IMR-90 (cell line): ENCODE measurements at regions of chr16 and their contacts with region 1.

Region 1: DNA sequence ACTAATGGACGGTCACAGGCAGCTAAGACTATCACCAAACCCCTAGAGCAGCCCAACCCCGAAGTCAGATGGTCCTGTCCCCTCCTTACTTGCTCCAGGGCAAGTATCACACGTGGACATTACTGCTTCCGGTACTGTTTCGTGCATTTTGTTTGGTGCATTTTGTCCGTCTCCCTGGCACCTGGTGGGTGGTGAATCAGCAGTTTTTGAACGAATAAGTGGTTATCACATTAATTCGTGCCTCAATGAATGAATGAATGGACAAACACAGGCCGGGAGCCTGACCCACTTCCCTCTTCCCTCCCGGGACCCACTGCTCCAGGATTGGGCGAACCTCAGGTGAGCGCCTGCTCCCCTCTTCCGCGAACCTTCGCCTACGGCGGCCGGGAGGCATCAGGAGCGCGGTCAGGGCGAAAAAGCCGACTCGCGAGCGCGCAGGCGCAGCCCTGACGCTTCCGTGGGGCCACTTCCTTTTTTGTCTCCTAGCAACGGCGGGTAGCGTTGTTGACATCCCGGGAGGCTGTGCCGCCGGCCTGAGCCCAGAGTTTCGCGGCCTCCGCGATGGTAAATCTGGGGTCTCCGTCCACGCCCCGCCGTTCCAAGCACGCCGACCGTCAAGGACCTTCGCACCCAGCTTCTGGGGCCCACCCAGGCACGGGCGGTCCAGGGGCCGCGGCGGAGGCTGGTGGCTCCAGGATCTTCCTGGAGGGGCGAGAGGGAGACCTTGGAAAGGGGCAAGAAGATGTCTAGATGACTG is at the start of gene DYNLRB2:
- DNase-seq: peak; percentile 84
- ATAC-seq: peak; percentile 99
- H3K4me3 ChIP-seq: peak within 1 kb of the TSS; percentile 50
- H3K27ac ChIP-seq: no peak within 1 kb of the TSS
- H3K4me1 ChIP-seq: no peaks in the 10 kb centered on the region
- H3K27me3 ChIP-seq: no peaks in the 10 kb centered on the region
- CTCF ChIP-seq: no peak
- POLR2A ChIP-seq: peak; percentile 30; the same call in 1 of the 2 replicates
- RAD21 ChIP-seq: no peak
- total RNA-seq, gene DYNLRB2: not detected in 2 replicates

Region 2: DNA sequence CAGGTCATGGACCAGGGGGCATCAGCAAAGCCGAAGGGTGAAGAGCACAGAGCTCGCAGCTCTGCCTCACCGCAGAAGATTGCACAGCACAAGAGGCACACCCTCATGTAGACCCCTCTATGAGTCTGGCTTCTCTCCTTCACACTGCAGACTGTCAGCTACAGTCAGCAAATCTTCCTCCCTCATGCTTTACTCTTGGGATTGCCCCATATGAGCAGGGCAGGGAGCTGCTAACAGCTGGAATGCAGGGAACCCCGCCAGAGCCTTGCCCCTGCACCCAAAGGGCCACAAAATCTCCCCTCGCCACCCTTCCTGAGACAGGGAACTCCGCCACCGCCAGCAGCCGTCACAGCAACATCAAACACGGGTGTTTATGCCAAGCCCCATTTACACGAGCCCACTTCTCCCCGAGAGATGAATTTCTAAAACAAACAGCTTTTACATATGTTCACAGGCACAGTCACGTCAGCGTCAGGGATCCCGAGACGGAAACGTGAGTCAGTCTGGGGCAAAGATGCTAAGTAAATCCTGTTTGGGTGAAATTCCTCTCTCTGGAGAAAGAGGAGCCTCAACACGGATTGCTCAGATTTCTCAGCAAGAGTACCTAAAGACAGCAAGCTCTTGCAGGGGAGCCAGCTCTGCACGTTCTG is 141.9 kb after region 1 on chr16:
- CTCF ChIA-PET with region 1: no interaction called
- POLR2A ChIA-PET with region 1: no interaction called
- dilution Hi-C with region 1: no loop called
- in situ Hi-C with region 1: no loop called
- intact Hi-C with region 1: loop called (anchors 5 kb)
- DNase-seq: peak; percentile 89
- ATAC-seq: peak; percentile 88
- H3K4me3 ChIP-seq: peak overlapping the region; percentile 13; the same call in 1 of the 2 replicates
- H3K27ac ChIP-seq: peak overlapping the region; percentile 25; the same call in 1 of the 2 replicates
- H3K4me1 ChIP-seq: peaks cover 6% of the 10 kb centered on the region; the same call in 1 of the 2 replicates
- H3K27me3 ChIP-seq: no peaks in the 10 kb centered on the region
- CTCF ChIP-seq: no peak
- POLR2A ChIP-seq: no peak
- RAD21 ChIP-seq: no peak

Region 3: DNA sequence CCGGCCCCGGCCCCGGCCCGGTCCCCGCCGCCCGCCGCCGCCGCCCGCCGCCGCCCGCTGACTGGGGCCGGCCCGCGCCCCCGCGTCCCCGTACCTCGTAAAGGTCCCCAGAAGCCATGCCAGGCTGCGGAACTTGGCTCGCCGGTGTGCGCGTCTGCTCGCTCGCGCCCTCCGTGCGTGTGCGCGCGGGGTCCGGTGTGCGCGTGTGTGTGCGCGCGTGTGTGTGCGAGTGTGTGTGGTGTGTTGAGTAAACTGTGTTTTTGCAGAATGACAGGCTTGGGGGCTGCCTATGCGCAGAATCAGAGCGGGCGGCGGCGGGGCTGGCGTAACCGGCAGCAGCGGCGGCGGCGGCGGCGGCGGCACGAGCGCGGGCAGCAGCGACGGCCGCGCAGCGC is 263.4 kb after region 1 on chr16:
- CTCF ChIA-PET with region 1: no interaction called
- POLR2A ChIA-PET with region 1: no interaction called
- dilution Hi-C with region 1: no loop called
- in situ Hi-C with region 1: loop called (anchors 25 kb)
- intact Hi-C with region 1: no loop called
- DNase-seq: peak; percentile 46
- ATAC-seq: peak; percentile 74
- H3K4me3 ChIP-seq: peak overlapping the region; percentile 100
- H3K27ac ChIP-seq: no peak overlapping the region; the same call in 1 of the 2 replicates
- H3K4me1 ChIP-seq: no peaks in the 10 kb centered on the region; the same call in 1 of the 2 replicates
- H3K27me3 ChIP-seq: no peaks in the 10 kb centered on the region
- CTCF ChIP-seq: no peak
- POLR2A ChIP-seq: no peak
- RAD21 ChIP-seq: no peak